Calu3 (cell line): ENCODE measurements at regions of chr4 and their contacts with region 1.

Region 1: DNA sequence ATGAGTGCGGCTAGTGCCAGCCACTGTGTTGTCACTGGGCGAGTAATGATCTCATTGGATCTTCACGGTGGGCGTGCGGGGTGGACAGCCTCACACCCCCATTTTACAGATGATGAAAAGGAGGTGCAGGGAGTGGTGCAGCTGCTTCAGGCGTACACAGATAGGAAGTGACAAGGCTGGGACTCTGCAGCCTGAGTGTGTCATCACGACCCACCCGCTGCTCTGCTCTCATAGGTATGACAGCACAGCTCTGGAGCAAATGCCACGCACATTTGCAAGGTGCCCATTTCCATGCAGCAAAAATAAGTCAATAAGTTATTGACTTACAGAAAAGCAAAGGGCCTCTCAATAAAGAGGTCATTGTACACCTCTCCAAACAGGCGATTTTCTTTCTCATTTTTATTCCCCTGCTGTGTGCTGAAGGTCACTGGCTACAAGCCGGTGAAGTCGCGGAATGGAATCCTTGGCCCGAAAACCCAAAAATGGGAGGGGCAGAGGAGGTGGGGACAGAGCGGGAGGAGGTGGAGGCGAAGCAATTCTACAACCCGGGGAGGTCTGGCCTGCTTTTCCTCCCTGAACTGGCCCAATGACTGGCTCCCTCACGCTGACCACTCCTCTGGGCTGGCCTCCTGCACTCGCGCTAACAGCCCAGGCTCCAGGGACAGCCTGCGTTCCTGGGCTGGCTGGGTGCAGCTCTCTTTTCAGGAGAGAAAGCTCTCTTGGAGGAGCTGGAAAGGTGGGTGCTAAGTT is at the start of gene SOD3:
- DNase-seq: peak; percentile 78
- H3K4me3 Mint-ChIP-seq: peak within 1 kb of the TSS; percentile 90
- H3K27ac Mint-ChIP-seq: peak within 1 kb of the TSS; percentile 85
- H3K4me1 Mint-ChIP-seq: peaks cover 38% of the 10 kb centered on the region
- H3K27me3 Mint-ChIP-seq: no peaks in the 10 kb centered on the region
- CTCF ChIP-seq: no peak
- total RNA-seq, gene SOD3: 26.2 and 33.7 TPM in 2 replicates

Region 2: DNA sequence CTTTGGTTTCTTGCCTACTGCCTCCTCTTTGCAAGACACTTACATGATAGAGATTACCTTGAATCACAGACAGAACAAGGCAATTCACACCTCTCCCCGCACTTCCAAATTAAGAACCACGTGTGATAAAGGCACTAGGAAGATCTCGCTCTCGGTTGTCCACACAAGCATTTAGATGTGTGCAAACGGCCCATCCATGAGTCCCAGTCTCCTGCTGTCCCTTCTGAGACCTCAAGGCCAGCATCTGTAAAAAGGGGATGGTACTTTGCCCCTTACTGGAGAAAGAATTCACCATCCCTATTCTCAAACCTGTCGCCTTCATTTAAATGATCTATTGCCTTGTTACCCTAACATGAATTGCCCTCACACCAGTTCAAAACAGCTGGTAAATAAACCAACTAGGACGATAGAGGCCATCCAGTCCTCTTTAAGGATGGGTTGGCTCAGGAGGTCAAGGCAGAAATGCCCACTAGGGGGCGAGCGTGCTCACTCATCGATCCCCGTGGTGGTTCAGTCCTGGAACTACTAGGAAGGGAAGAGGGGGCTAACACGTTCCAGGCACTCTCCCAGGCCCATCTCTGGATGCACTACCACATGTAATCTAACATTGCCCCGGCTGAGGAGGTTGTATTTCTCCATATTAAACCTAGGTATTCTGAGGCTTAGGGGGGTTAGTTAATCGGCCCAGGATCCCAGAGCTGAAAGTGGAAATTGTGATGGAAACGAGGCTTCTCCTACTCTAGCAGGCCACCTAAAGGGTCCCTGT is 306.5 kb before region 1 on chr4:
- CTCF ChIA-PET with region 1: no interaction called
- intact Hi-C with region 1: loop called (anchors 10 kb)
- DNase-seq: peak; percentile 81
- H3K4me3 Mint-ChIP-seq: no peak overlapping the region
- H3K27ac Mint-ChIP-seq: no peak overlapping the region
- H3K4me1 Mint-ChIP-seq: no peaks in the 10 kb centered on the region
- H3K27me3 Mint-ChIP-seq: peaks cover 17% of the 10 kb centered on the region
- CTCF ChIP-seq: peak; percentile 65

Region 3: DNA sequence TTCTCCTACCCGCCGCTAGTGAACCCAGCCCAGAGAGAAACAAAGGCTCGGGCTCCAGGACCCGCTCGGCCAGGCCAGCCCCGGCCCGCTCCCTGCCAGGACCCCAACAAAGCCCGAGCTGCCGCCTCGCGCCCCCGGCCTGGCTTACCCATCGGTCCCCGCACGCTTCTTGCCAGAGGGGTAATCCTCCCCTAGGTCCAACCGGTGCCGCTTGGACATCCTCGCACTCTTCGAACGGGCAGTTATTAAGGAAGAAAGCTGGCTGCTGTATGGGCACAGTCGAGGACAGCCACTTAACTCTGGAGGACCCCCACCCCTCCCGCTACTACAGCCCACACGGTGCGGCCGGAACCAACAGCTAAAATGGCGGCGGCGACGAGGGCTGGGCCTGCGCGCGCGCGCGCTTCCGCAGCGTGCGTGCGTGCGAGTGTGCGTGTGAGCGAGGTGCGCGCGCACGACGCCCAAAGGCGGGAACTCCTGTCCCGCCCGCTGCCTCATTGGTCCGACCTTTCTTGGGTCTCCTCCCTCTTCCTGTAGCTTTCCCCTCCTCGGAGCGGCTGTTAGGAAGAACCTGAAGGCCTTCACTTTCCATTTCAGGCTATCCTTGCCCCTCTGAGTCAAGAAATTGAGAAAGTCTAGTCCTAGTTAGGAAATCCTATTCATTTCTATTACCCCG is 210.8 kb before region 1 on chr4 and contains the start of gene DHX15:
- CTCF ChIA-PET with region 1: no interaction called
- intact Hi-C with region 1: loop called (anchors 5 kb)
- DNase-seq: peak; percentile 89
- H3K4me3 Mint-ChIP-seq: peak within 1 kb of the TSS; percentile 90
- H3K27ac Mint-ChIP-seq: peak within 1 kb of the TSS; percentile 88
- H3K4me1 Mint-ChIP-seq: no peaks in the 10 kb centered on the region
- H3K27me3 Mint-ChIP-seq: no peaks in the 10 kb centered on the region
- CTCF ChIP-seq: no peak
- total RNA-seq, gene DHX15: 161 and 169 TPM in 2 replicates

Region 4: GRCh38 chr4:24594891-24595290 is 200.2 kb before region 1 on chr4:
- CTCF ChIA-PET with region 1: no interaction called
- intact Hi-C with region 1: loop called (anchors 5 kb)
- DNase-seq: no peak
- H3K4me3 Mint-ChIP-seq: peak overlapping the region; percentile 18
- H3K27ac Mint-ChIP-seq: peak overlapping the region; percentile 100
- H3K4me1 Mint-ChIP-seq: peaks cover 32% of the 10 kb centered on the region
- H3K27me3 Mint-ChIP-seq: no peaks in the 10 kb centered on the region
- CTCF ChIP-seq: no peak

Region 5: GRCh38 chr4:24753500-24753899 is 41.6 kb before region 1 on chr4:
- CTCF ChIA-PET with region 1: interaction called, 3 read pairs
- intact Hi-C with region 1: loop called (anchors 5 kb)
- DNase-seq: peak; percentile 52
- H3K4me3 Mint-ChIP-seq: no peak overlapping the region
- H3K27ac Mint-ChIP-seq: peak overlapping the region; percentile 51
- H3K4me1 Mint-ChIP-seq: peaks cover 21% of the 10 kb centered on the region
- H3K27me3 Mint-ChIP-seq: no peaks in the 10 kb centered on the region
- CTCF ChIP-seq: no peak

Region 6: GRCh38 chr4:24935856-24936255 is 140.8 kb after region 1 on chr4:
- CTCF ChIA-PET with region 1: no interaction called
- intact Hi-C with region 1: no loop called
- DNase-seq: no peak
- H3K4me3 Mint-ChIP-seq: no peak overlapping the region
- H3K27ac Mint-ChIP-seq: no peak overlapping the region
- H3K4me1 Mint-ChIP-seq: no peaks in the 10 kb centered on the region
- H3K27me3 Mint-ChIP-seq: peaks cover 23% of the 10 kb centered on the region
- CTCF ChIP-seq: no peak

Region 7: GRCh38 chr4:25310066-25310802 is 515.1 kb after region 1 on chr4:
- CTCF ChIA-PET with region 1: no interaction called
- intact Hi-C with region 1: no loop called
- DNase-seq: no peak
- H3K4me3 Mint-ChIP-seq: no peak overlapping the region
- H3K27ac Mint-ChIP-seq: no peak overlapping the region
- H3K4me1 Mint-ChIP-seq: peaks cover 9% of the 10 kb centered on the region
- H3K27me3 Mint-ChIP-seq: no peaks in the 10 kb centered on the region
- CTCF ChIP-seq: no peak